IMR-90 (cell line): ENCODE measurements at regions of chr9 and their contacts with region 1.

Region 1: DNA sequence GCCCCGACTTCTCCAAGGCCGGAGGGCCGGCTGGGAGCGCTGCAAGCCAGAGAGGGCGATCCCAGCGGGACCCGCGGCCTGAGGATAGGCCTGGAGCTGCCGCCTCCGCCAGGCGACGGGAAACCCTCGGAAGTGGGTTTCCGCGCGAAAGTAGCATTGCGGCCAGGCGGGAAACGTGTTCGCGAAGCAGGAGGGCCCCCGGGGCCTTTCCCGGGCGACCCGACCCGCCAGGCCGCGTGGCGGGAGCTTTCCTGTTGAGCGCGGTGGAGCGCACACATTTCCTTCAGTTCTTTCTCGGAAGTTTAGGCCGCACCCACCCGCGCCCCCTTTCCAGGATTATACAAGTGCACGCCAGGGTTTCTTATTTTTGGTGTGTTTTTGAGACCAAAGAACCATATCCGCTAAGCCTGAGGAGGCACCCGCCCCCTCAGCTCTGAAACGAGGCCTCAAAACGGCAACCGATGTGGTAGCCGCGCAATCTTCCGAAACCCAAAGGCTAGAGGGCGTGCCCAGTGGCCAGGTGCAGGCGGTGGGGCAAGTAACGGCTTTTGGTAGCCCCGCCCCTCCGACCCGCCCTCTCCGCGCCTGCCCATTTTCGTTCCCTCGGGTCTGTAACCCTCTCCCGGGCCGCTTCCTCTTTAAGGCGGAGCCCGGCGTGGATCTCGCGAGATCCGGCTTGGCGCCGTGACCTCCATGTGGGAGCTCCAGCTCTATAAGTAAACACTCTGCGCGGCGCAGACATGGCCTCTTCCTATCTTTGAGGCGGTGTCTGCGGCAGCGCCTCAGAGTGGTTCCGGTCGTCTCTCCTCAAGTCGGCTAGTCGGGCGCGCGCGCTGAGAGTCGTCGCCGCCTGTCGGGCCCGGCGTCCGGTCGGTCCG is at the start of gene UHRF2:
- DNase-seq: peak; percentile 97
- ATAC-seq: peak; percentile 95
- H3K4me3 ChIP-seq: peak within 1 kb of the TSS; percentile 83
- H3K27ac ChIP-seq: peak within 1 kb of the TSS; percentile 83
- H3K4me1 ChIP-seq: peaks cover 8% of the 10 kb centered on the region
- H3K27me3 ChIP-seq: no peaks in the 10 kb centered on the region
- CTCF ChIP-seq: 0 out of 2 replicates have a peak, but pooled peaks have one; percentile 2
- POLR2A ChIP-seq: peak; percentile 92
- RAD21 ChIP-seq: no peak
- total RNA-seq, gene UHRF2: 37.3 and 55.3 TPM in 2 replicates

Region 2: DNA sequence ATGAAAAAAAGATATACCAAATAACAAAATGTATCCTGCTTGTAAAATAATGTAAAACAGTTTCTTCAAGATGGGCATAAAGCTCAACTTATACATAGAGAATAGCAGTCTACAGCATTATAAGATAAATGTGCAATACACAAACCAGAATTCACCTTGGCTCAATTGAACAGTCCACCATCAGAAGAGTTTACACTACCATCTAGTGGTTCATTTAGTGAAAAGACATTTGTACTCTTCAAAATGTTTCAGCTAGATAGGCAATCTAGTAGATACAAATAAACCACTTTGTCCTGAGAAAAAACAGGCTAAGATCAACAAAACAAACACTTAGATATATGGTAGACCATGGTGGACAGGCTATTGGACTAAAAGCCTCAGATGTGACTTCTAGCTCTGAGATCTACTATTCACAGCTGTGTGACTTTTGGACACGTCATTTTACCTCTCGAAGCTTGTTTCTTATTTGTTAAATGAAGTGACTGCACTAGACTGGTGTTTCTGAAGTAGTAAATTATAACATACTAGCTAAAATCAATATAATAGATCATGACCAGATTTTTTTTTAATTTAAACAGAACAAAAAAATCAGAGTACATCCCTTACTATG is 106.7 kb before region 1 on chr9:
- CTCF ChIA-PET with region 1: no interaction called
- POLR2A ChIA-PET with region 1: no interaction called
- dilution Hi-C with region 1: no loop called
- in situ Hi-C with region 1: no loop called
- intact Hi-C with region 1: no loop called
- DNase-seq: peak; percentile 50
- ATAC-seq: peak; percentile 78
- H3K4me3 ChIP-seq: no peak overlapping the region
- H3K27ac ChIP-seq: no peak overlapping the region
- H3K4me1 ChIP-seq: no peaks in the 10 kb centered on the region
- H3K27me3 ChIP-seq: peaks cover 2% of the 10 kb centered on the region; the same call in 1 of the 2 replicates
- CTCF ChIP-seq: peak; percentile 61
- POLR2A ChIP-seq: no peak
- RAD21 ChIP-seq: peak; percentile 69

Region 3: DNA sequence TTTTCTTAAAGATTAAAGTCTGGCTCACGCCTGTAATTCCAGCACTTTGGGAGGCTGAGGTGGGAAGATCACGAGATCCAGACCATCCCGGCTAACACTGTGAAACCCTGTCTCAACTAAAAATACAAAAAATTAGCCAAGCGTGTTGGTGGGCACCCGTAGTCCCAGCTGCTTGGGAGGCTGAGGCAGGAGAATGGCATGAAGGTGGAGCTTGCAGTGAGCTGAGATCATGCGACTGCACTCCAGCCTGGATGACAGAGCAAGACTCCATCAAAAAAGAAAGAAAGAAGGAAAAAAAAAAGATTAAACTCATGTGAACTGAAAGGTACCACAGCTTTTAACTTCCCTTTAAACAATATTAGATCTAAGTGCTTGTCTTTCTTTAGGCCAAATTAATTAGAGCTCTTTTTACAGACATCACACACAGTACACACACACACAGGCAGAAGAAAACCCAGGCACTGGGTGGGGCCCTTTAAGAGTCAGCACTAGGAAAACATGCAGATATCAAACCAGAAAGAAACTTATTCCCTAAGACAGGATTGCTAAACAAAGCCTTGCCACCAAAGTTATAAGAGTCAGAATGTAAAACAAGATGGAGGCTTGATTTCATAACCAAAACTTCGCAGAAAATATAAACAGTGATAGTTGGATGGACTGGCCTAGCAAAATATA is 29.0 kb before region 1 on chr9:
- CTCF ChIA-PET with region 1: no interaction called
- POLR2A ChIA-PET with region 1: no interaction called
- dilution Hi-C with region 1: no loop called
- in situ Hi-C with region 1: no loop called
- intact Hi-C with region 1: loop called (anchors 2 kb)
- DNase-seq: peak; percentile 78
- ATAC-seq: peak; percentile 95
- H3K4me3 ChIP-seq: no peak overlapping the region
- H3K27ac ChIP-seq: peak overlapping the region; percentile 92
- H3K4me1 ChIP-seq: peaks cover 8% of the 10 kb centered on the region
- H3K27me3 ChIP-seq: no peaks in the 10 kb centered on the region
- CTCF ChIP-seq: no peak
- POLR2A ChIP-seq: no peak
- RAD21 ChIP-seq: no peak

Region 4: GRCh38 chr9:6566409-6567139 is 153.8 kb after region 1 on chr9:
- CTCF ChIA-PET with region 1: no interaction called
- POLR2A ChIA-PET with region 1: interaction called, 3 read pairs
- dilution Hi-C with region 1: no loop called
- in situ Hi-C with region 1: no loop called
- intact Hi-C with region 1: loop called (anchors 1 kb)
- DNase-seq: peak; percentile 99
- ATAC-seq: peak; percentile 85
- H3K4me3 ChIP-seq: peak overlapping the region; percentile 38; the same call in 1 of the 2 replicates
- H3K27ac ChIP-seq: peak overlapping the region; percentile 98
- H3K4me1 ChIP-seq: peaks cover 12% of the 10 kb centered on the region
- H3K27me3 ChIP-seq: no peaks in the 10 kb centered on the region
- CTCF ChIP-seq: no peak
- POLR2A ChIP-seq: peak; percentile 52; the same call in 1 of the 2 replicates
- RAD21 ChIP-seq: 0 out of 2 replicates have a peak, but pooled peaks have one; percentile 11